Dorsolateral prefrontal cortex (tissue), 120 donors: ENCODE measurements at regions of chr15 and their contacts with region 1.

Region 1: GRCh38 chr15:56869573-56869972 is 48.9 kb upstream of the TCF12 start:
- DNase-seq: peak in 9 of 10 donors; percentile 12 to 75 (median 48)
- H3K4me3 ChIP-seq: no peak overlapping the region
- H3K27ac ChIP-seq: peak overlapping the region in 1 of 59 donors; percentile 2
- H3K27me3 ChIP-seq: no peaks in the 10 kb centered on the region
- CTCF ChIP-seq: peak; percentile 51 to 82 (median 70)

Region 2: DNA sequence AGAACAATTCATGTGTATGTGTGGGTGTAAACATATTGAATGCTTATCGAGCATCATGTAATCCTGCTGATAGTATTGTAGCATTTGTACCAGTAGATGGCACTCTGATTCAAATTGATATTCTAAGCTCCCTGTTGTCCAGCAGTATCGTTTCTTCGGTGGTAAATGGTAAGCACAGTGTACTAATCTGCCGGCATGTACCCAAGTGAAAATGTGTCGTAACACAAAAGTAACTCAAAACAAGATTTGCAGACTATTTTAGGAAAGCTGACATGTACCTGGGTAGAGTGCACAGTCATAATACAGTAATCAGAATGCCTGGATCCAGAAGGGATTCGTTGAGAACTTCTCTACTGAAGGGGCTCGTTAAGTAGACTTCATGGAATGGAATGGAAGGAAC is 372.9 kb before region 1 on chr15:
- intact Hi-C with region 1: loop called in 1 of 2 experiments (anchors 2 kb)
- DNase-seq: no peak
- H3K4me3 ChIP-seq: peak overlapping the region in 50 of 59 donors; percentile 2 to 55 (median 36)
- H3K27ac ChIP-seq: no peak overlapping the region
- H3K27me3 ChIP-seq: no peaks in the 10 kb centered on the region
- CTCF ChIP-seq: peak; percentile 50 to 92 (median 77)